Activated CD4-positive, alpha-beta memory T cell treated with anti-CD3 and anti-CD28 coated beads, Interleukin-2, amount 10 ng/mL, durations not matched to agents 7 days and 5 days (primary cell): ENCODE measurements at regions of chr3 and their contacts with region 1.

Region 1: GRCh38 chr3:149812606-149813366 is at the start of gene RNF13:
- DNase-seq: peak; percentile 92
- H3K4me3 Mint-ChIP-seq: peak within 1 kb of the TSS; percentile 97
- H3K27ac Mint-ChIP-seq: peak within 1 kb of the TSS; percentile 99
- H3K4me1 Mint-ChIP-seq: peaks cover 48% of the 10 kb centered on the region
- H3K27me3 Mint-ChIP-seq: peaks cover 9% of the 10 kb centered on the region
- total RNA-seq, gene RNF13: 37.2 to 42.4 TPM

Region 2: DNA sequence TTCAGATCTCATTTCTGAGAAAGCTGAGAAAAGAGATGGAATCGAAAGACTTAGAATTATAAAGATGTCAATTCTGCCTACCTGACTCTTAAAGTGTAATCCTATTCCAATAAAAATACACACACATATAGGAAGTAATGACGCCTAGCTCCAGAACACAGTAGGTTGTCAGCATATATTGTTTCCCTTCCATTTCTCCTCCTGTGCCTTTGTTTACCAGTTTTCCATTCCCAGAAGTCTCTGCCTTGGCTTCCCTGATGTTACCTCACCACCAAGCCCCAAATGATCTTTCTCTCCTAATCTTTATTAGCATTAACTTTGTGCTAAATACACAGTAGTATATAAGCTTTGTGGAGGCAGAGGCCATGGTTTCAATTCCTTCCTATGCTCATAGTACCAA is 298.3 kb before region 1 on chr3:
- CTCF ChIA-PET with region 1: interaction called, 10 read pairs
- POLR2A ChIA-PET with region 1: no interaction called
- DNase-seq: no peak
- H3K4me3 Mint-ChIP-seq: no peak overlapping the region
- H3K27ac Mint-ChIP-seq: no peak overlapping the region
- H3K4me1 Mint-ChIP-seq: peaks cover 4% of the 10 kb centered on the region
- H3K27me3 Mint-ChIP-seq: peaks cover 12% of the 10 kb centered on the region

Region 3: GRCh38 chr3:149752051-149752787 is 60.6 kb before region 1 on chr3 and contains the start of gene COMMD2:
- CTCF ChIA-PET with region 1: interaction called, 32 read pairs
- POLR2A ChIA-PET with region 1: interaction called, 22 read pairs
- DNase-seq: peak; percentile 82
- H3K4me3 Mint-ChIP-seq: peak within 1 kb of the TSS; percentile 95
- H3K27ac Mint-ChIP-seq: peak within 1 kb of the TSS; percentile 82
- H3K4me1 Mint-ChIP-seq: peaks cover 32% of the 10 kb centered on the region
- H3K27me3 Mint-ChIP-seq: peaks cover 5% of the 10 kb centered on the region
- total RNA-seq, gene COMMD2: 26.3 to 28.9 TPM

Region 4: DNA sequence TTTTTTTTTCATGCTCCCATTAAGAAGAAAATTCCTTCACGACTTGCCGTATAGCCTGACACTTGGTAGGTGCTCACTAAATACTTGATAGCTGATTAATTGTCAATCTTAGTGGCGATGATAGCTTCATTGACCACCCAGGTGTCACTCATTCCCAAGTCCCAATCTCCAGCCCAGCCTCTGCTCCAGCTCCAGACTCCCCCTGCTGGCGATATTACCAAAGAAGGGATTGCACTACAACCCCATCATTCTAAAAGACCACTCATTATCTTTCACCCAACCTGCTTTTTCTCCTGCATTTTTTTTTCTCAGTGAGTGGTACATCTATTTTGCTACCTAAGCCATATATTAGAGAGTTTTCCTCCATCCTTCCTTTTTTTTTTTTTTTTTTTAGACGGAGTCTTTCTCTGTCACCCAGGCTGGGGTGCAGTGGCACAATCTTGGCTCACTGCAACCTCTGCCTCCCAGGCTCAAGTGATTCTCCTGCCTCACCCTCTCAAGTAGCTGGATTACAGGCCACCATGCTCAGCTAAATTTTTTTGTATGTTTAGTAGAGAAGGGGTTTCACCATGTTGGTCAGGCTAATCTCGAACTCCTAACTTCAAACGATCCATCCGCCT is 41.0 kb before region 1 on chr3:
- CTCF ChIA-PET with region 1: interaction called, 19 read pairs
- POLR2A ChIA-PET with region 1: no interaction called
- DNase-seq: peak; percentile 28
- H3K4me3 Mint-ChIP-seq: no peak overlapping the region
- H3K27ac Mint-ChIP-seq: no peak overlapping the region
- H3K4me1 Mint-ChIP-seq: no peaks in the 10 kb centered on the region
- H3K27me3 Mint-ChIP-seq: peaks cover 17% of the 10 kb centered on the region

Region 5: GRCh38 chr3:149800693-149801092 is 12.1 kb before region 1 on chr3:
- CTCF ChIA-PET with region 1: interaction called, 21 read pairs
- POLR2A ChIA-PET with region 1: no interaction called
- DNase-seq: no peak
- H3K4me3 Mint-ChIP-seq: no peak overlapping the region
- H3K27ac Mint-ChIP-seq: no peak overlapping the region
- H3K4me1 Mint-ChIP-seq: no peaks in the 10 kb centered on the region
- H3K27me3 Mint-ChIP-seq: peaks cover 25% of the 10 kb centered on the region

Region 6: DNA sequence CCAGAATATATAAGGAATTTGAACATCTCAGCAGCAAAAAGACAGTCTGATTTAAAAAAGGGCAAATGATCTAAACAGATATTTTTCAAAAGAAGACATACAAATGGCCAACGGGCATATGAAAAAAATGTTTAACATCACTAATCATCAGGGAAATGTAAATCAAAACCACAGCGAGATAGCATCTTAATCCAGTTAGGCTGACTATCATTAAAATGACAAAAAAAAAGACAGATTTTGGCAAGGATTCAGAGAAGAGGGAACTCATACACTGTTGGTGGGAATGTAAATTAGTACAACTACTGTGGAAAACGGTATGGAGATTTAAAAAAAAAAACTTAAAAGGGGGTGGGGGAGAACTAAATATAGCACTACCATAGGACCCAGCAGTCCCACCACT is 48.1 kb after region 1 on chr3:
- CTCF ChIA-PET with region 1: no interaction called
- POLR2A ChIA-PET with region 1: no interaction called
- DNase-seq: no peak
- H3K4me3 Mint-ChIP-seq: no peak overlapping the region
- H3K27ac Mint-ChIP-seq: no peak overlapping the region
- H3K4me1 Mint-ChIP-seq: no peaks in the 10 kb centered on the region
- H3K27me3 Mint-ChIP-seq: no peaks in the 10 kb centered on the region

Region 7: GRCh38 chr3:150049317-150049716 is 236.5 kb after region 1 on chr3:
- CTCF ChIA-PET with region 1: no interaction called
- POLR2A ChIA-PET with region 1: no interaction called
- DNase-seq: no peak
- H3K4me3 Mint-ChIP-seq: no peak overlapping the region
- H3K27ac Mint-ChIP-seq: no peak overlapping the region
- H3K4me1 Mint-ChIP-seq: no peaks in the 10 kb centered on the region
- H3K27me3 Mint-ChIP-seq: peaks cover 28% of the 10 kb centered on the region